OCI-LY7 (cell line): ENCODE measurements at regions of chr6 and their contacts with region 1.

Region 1: GRCh38 chr6:161370880-161371279 is 97.0 kb upstream of the AGPAT4 start:
- DNase-seq: peak; percentile 76
- H3K4me3 ChIP-seq: no peak overlapping the region
- H3K27ac ChIP-seq: no peak overlapping the region
- H3K4me1 ChIP-seq: no peaks in the 10 kb centered on the region
- CTCF ChIP-seq: peak; percentile 90

Region 2: GRCh38 chr6:160520043-160520904 is 850.6 kb before region 1 on chr6:
- CTCF ChIA-PET with region 1: no interaction called
- POLR2A ChIA-PET with region 1: no interaction called
- intact Hi-C with region 1: loop called (anchors 5 kb)
- DNase-seq: peak; percentile 30
- H3K4me3 ChIP-seq: no peak overlapping the region
- H3K27ac ChIP-seq: no peak overlapping the region
- H3K4me1 ChIP-seq: no peaks in the 10 kb centered on the region
- CTCF ChIP-seq: peak; percentile 57

Region 3: DNA sequence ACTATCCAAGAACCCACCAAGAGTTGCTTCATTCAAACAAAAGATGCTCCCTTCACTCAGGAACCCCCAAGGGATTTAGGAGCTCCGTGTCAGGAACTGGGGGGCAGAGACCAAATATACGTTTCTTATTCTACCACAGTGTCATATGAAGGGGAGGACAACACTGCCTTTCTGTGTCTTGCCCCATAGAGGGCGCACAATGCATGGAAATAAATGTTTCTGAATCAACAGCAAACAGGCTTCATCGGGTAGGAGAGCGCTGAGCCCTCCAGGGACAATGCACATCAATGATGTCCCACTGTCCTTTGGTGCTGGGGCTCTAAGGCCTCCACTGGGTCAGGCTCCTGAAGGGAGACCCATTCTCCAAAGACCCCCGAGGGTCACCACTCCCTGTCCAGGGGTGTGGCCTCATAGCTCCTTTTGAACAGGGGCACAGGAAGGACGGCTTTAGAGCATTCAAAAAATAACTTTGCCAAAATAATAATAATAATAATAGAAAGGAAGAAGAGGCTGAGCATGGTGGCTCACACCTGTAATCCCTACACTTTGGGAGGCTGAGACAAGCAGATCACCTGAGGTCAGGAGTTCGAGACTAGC is 637.7 kb before region 1 on chr6:
- CTCF ChIA-PET with region 1: no interaction called
- POLR2A ChIA-PET with region 1: interaction called, 14 read pairs
- intact Hi-C with region 1: loop called (anchors 1 kb)
- DNase-seq: peak; percentile 86
- H3K4me3 ChIP-seq: no peak overlapping the region
- H3K27ac ChIP-seq: no peak overlapping the region
- H3K4me1 ChIP-seq: peaks cover 13% of the 10 kb centered on the region
- CTCF ChIP-seq: peak; percentile 88

Region 4: DNA sequence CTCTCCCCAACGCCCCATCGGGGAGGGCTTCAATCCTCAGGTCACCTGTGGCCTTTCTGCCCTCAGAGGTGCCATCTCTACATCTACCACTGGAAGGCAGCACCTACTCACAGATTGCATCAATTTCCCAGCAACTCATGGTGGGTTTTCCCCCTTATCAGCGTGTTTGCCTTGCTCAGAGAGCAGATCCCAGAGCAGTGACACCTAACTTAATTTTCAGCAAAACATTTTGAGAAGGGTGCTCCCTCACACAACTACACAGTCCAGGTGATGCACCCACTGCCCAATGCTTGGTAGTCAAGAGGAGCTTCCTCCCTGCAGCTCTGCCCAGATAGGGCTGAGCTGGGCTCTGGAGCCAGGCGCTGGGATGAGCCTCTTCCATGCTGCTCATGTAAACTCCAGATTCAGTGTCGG is 620.6 kb before region 1 on chr6:
- CTCF ChIA-PET with region 1: no interaction called
- POLR2A ChIA-PET with region 1: interaction called, 5 read pairs
- intact Hi-C with region 1: loop called (anchors 1 kb)
- DNase-seq: peak; percentile 69
- H3K4me3 ChIP-seq: no peak overlapping the region
- H3K27ac ChIP-seq: no peak overlapping the region
- H3K4me1 ChIP-seq: peaks cover 9% of the 10 kb centered on the region
- CTCF ChIP-seq: peak; percentile 86

Region 5: DNA sequence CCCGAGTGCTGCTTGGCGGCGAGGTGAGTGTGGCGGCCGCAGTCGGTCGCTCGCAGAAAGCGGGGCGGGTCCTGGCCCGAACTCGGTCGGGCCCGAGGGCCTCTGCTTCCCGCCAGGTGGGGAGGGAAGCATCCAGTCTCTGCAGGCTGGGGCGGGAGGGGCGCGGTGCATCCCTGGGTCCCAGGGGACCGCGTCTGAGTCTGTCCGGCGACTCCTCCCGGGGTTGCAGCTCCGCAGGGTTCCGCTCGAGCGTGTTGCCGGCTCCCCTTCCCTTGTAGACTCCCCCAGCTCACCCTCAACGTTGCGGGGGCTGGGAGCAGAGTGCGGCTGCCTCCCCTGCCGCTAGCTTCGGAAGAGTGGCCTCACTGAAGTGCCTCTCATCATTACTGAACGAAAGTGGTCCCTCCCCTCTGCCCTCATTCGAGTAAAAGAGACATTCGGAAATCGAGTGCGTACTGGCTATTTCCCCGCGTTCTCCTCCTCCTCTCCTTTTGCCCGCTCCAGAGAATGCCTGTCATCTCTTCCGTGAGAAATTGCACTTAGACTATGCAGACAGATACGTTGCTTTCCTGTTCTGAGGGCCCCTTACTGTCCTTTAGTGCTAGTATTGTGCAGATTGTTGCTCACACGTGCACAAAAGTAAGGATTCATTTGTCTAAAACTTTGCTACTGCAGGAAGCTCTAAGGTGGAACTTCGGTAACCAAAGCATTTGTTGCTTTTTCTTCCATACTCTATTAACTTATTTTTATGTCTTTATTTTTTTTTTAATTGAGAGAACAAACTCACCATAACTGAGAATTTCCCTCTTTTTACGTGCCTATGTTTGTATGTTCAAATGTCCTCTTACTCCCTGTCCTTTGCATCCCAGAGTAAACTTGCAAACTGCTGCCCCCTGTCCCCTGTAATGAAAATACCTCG is 378.6 kb before region 1 on chr6:
- CTCF ChIA-PET with region 1: no interaction called
- POLR2A ChIA-PET with region 1: no interaction called
- intact Hi-C with region 1: loop called (anchors 5 kb)
- DNase-seq: peak; percentile 78
- H3K4me3 ChIP-seq: peak overlapping the region; percentile 86
- H3K27ac ChIP-seq: peak overlapping the region; percentile 76
- H3K4me1 ChIP-seq: peaks cover 13% of the 10 kb centered on the region
- CTCF ChIP-seq: peak; percentile 87

Region 6: GRCh38 chr6:161152907-161153662 is 217.8 kb before region 1 on chr6:
- CTCF ChIA-PET with region 1: no interaction called
- POLR2A ChIA-PET with region 1: no interaction called
- intact Hi-C with region 1: loop called (anchors 1 kb)
- DNase-seq: peak; percentile 7
- H3K4me3 ChIP-seq: no peak overlapping the region
- H3K27ac ChIP-seq: no peak overlapping the region
- H3K4me1 ChIP-seq: no peaks in the 10 kb centered on the region
- CTCF ChIP-seq: peak; percentile 56